ENCODE measurements at regions of chr7 and their contacts with region 1.

Region 1: GRCh38 chr7:105013221-105013815 is 687 bp upstream of the KMT2E start:
- DNase-seq: peak; percentile 66
- H3K4me3 ChIP-seq: peak overlapping the region; percentile 80
- H3K27me3 ChIP-seq: no peaks in the 10 kb centered on the region
- CTCF ChIP-seq: peak; percentile 77

Region 2: GRCh38 chr7:104983578-104984539 is 29.5 kb before region 1 on chr7:
- CTCF ChIA-PET with region 1: interaction called, 12 read pairs
- POLR2A ChIA-PET with region 1: interaction called, 9 read pairs
- DNase-seq: peak; percentile 35
- H3K4me3 ChIP-seq: peak overlapping the region; percentile 60
- H3K27me3 ChIP-seq: no peaks in the 10 kb centered on the region
- CTCF ChIP-seq: peak; percentile 64

Region 3: GRCh38 chr7:105026750-105027149 is 13.4 kb after region 1 on chr7:
- CTCF ChIA-PET with region 1: interaction called, 4 read pairs
- POLR2A ChIA-PET with region 1: interaction called, 12 read pairs
- DNase-seq: no peak
- H3K4me3 ChIP-seq: no peak overlapping the region
- H3K27me3 ChIP-seq: no peaks in the 10 kb centered on the region
- CTCF ChIP-seq: no peak

Region 4: DNA sequence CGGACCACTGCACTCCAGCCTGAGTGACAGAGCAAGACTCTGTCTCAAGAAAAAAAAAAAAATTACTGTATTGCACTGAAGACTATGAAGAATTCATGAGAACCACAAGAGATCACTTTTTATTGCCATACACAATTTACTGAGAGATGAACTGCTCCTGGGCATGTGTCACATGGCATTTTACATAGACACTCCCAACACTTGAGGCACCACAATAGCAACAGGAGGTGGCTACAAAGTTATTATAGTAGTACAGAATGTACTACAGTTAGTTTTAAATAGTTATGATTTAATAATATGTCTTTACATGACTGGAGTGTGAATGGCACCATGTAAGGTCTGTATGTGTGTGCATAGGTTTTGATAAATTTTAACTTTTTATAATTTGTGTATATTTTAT is 71.3 kb after region 1 on chr7:
- CTCF ChIA-PET with region 1: no interaction called
- POLR2A ChIA-PET with region 1: interaction called, 27 read pairs
- DNase-seq: no peak
- H3K4me3 ChIP-seq: no peak overlapping the region
- H3K27me3 ChIP-seq: no peaks in the 10 kb centered on the region
- CTCF ChIP-seq: no peak

Measured in BJ (cell line).